PC-9 (cell line): ENCODE measurements at regions of chr1 and their contacts with region 1.

Region 1: DNA sequence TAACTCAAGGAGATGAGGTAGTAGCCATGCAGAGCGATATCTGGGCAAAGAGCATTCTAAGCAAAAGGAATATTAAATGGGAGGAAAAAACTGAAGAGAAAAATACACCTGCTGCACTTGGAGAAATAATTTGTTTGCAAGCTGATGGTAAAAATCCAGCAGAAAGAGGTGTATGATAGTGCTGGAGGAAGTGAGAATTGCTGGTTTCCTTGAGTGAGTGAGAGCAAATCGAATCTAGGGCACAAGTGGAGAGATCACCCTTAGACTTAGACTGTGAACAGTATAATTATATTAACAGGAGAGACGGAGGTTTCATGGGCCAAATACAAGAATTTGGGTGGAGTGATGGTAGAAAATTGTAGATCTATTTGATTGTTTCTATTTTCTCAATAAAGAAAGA is 2.7 kb upstream of the CR1 start:
- DNase-seq: no peak
- H3K4me3 ChIP-seq: no peak overlapping the region
- H3K27ac ChIP-seq: no peak overlapping the region
- H3K4me1 ChIP-seq: no peaks in the 10 kb centered on the region
- H3K27me3 ChIP-seq: no peaks in the 10 kb centered on the region
- CTCF ChIP-seq: no peak

Region 2: DNA sequence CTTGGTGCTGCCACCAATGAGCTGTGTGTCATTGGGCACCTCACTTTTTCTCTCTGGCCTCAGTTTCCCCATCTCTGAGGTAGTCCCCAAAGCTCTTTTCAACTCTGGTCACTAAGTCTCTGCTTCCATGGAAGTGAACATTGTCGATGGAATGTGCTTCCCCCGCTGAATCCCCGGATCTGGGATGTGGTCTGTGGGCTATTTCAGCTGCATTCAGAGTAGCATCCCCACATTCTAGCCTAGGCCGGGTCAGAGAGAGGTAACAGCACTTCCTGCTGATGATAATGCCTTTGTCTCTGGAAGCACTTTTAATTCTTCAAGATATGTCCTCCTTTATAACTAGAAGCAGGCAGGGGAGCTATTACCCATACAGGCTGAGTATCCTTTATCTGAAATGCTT is 956.1 kb before region 1 on chr1:
- CTCF ChIA-PET with region 1: interaction called, 12 read pairs
- POLR2A ChIA-PET with region 1: no interaction called
- intact Hi-C with region 1: no loop called
- DNase-seq: no peak
- H3K4me3 ChIP-seq: no peak overlapping the region
- H3K27ac ChIP-seq: no peak overlapping the region
- H3K4me1 ChIP-seq: no peaks in the 10 kb centered on the region
- H3K27me3 ChIP-seq: no peaks in the 10 kb centered on the region
- CTCF ChIP-seq: no peak